ENCODE measurements at regions of chr17 and their contacts with region 1.

Region 1: GRCh38 chr17:1055751-1056645 is 59.1 kb downstream of the TIMM22 start:
- DNase-seq: peak; percentile 47 to 74 (median 68)
- H3K4me3 ChIP-seq: no peak overlapping the region
- H3K27ac ChIP-seq: no peak overlapping the region
- H3K4me1 ChIP-seq: no peaks in the 10 kb centered on the region
- H3K27me3 ChIP-seq: no peaks in the 10 kb centered on the region

Region 2: DNA sequence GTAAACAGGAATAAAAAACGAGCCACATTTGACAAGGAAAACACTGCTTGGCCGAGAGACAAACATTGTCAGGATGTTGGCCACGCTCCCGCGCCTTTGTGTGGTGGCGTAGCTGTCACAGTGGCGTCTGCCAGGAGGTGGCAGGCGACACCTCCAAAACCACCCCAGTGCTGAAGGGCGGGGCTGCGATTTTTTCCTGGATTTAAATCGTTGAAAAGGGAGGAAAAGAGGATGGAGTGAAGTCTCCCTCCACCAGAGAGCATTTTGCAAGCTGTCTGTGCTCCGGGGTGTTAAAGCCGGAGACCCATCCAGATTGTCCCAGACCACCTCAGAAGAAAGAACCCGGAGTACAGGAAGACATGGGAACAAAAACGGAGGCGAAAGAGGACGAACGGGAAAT is 261.1 kb before region 1 on chr17:
- CTCF ChIA-PET with region 1: interaction called, 20 read pairs
- POLR2A ChIA-PET with region 1: no interaction called
- DNase-seq: peak; percentile 54 to 65 (median 60)
- H3K4me3 ChIP-seq: peak overlapping the region in 1 of 7 experiments; percentile 31
- H3K27ac ChIP-seq: no peak overlapping the region
- H3K4me1 ChIP-seq: peaks cover 0 to 7% (median 0%) of the 10 kb centered on the region in 4 experiments
- H3K27me3 ChIP-seq: peaks cover 0 to 2% (median 0%) of the 10 kb centered on the region in 5 experiments

Region 3: DNA sequence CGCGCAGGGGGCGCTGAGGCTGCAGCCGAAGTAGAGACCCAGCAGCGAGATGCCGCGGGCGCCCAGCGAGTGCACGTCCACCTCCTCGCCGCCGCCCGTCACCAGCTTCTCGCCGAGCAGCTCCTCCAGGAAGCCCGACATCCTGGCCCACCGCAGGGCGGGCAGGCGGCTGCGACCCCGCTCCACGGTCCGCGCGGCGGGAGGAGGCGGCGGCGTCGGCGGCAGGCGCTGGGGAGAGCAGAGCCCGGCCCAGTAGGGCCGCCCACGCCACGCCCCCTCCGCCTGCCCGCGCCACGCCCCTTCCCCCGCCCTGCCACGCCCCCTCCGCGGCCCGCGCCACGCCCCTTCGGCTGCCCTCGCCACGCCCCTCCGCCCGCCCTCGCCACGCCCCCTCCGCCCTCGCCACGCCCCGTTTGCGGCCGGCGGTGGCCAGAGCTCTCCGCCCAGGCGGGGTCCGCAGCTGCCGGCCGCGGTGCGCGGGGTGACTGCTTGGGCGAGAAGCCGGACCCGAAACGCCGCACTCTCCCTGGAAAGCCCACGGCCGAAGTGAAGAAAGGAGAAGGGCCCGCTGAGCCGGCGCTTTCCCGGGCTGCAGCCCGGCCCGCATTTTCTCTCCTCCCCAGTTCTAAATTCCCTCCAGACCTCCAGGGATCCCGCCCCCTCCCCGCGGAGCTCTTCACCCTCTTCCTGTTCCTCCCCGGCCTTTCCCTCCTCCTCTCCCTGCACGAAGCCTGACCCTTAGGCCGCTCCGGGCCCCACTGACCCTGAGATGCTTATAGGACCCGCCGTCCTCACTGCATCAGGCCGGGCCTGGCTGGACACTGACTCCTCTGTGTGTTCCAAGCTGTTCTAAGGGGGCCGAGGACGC is 76.2 kb before region 1 on chr17 and contains the start of gene NXN:
- CTCF ChIA-PET with region 1: interaction called, 17 read pairs
- POLR2A ChIA-PET with region 1: no interaction called
- DNase-seq: peak; percentile 55 to 74 (median 73)
- H3K4me3 ChIP-seq: peak within 1 kb of the TSS; percentile 27 to 80 (median 63)
- H3K27ac ChIP-seq: no peak within 1 kb of the TSS
- H3K4me1 ChIP-seq: peaks cover 0 to 19% (median 13%) of the 10 kb centered on the region in 4 experiments
- H3K27me3 ChIP-seq: peaks cover 17 to 39% (median 20%) of the 10 kb centered on the region in 5 experiments

Region 4: GRCh38 chr17:996554-997344 is 59.2 kb before region 1 on chr17 and contains the start of gene TIMM22:
- CTCF ChIA-PET with region 1: interaction called, 15 read pairs
- POLR2A ChIA-PET with region 1: no interaction called
- DNase-seq: peak; percentile 98 to 99 (median 99)
- H3K4me3 ChIP-seq: peak within 1 kb of the TSS; percentile 85 to 100 (median 97)
- H3K27ac ChIP-seq: peak within 1 kb of the TSS; percentile 80 to 92
- H3K4me1 ChIP-seq: peaks cover 8 to 17% (median 12%) of the 10 kb centered on the region in 4 experiments
- H3K27me3 ChIP-seq: no peaks in the 10 kb centered on the region

Region 5: GRCh38 chr17:1005361-1005946 is 50.5 kb before region 1 on chr17:
- CTCF ChIA-PET with region 1: interaction called, 18 read pairs
- POLR2A ChIA-PET with region 1: no interaction called
- DNase-seq: peak; percentile 33 to 70 (median 67)
- H3K4me3 ChIP-seq: peak overlapping the region in 2 of 7 experiments; percentile 22 to 34
- H3K27ac ChIP-seq: peak overlapping the region in 1 of 2 experiments; percentile 21
- H3K4me1 ChIP-seq: peaks cover 0 to 27% (median 11%) of the 10 kb centered on the region in 4 experiments
- H3K27me3 ChIP-seq: no peaks in the 10 kb centered on the region

Region 6: DNA sequence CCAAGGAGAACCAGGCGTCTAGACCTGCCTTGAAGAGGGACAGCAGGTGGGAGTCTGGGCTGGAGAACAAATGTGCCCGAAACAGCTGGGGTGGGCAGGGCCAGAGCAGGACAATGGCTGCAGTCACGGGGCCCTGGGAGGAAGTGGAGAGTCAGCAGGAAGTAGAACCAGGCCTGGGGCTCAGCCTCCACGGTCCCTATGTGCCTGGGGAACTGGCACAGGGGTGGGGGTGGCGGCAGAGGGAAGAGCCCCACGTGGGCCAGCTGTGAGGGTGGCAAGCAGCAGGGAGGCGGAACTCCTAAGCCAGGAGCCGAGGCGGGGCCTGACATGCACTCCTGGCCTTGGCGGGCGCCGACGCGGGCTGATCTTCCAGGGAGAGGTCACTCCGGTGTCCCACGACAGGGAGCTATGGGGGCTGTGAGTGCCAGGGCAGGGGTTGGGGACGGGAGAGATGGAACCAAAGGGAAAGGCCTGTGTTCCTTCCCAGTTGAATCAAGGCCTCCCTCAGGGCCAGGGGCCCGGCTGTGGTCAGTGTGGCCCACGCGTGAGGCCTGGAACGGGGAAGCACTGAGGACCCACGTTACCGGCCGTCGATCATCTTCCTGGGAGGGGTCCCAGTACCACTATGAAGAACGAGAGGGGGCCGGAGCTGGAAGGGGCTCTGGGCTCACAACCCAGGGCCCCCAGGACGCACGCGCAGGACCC is 16.3 kb before region 1 on chr17:
- CTCF ChIA-PET with region 1: interaction called, 22 read pairs
- POLR2A ChIA-PET with region 1: interaction called, 3 read pairs
- DNase-seq: peak; percentile 44 to 80 (median 73)
- H3K4me3 ChIP-seq: peak overlapping the region in 3 of 7 experiments; percentile 26 to 48 (median 44)
- H3K27ac ChIP-seq: peak overlapping the region in 1 of 2 experiments; percentile 34
- H3K4me1 ChIP-seq: peaks cover 0 to 39% (median 33%) of the 10 kb centered on the region in 4 experiments
- H3K27me3 ChIP-seq: no peaks in the 10 kb centered on the region

Region 7: DNA sequence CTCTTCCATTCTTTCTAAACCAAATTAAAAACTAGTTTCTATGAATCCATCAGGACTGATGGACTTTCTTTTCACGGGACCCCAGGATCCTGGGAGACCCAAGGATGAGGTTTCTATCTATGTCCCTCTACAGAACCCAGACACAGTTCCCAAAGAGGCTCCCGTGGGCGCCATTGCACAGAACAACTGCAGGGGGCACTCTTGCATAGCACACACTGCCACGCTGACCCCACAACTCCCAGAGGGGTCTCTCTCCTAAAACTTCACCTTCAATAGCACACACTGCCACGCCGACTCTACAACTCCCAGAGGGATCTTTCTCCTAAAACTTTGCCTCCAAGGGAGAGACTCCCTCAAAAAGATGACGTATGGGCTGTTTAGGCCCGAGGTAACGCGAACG is 114.7 kb after region 1 on chr17:
- CTCF ChIA-PET with region 1: no interaction called
- POLR2A ChIA-PET with region 1: no interaction called
- DNase-seq: no peak
- H3K4me3 ChIP-seq: no peak overlapping the region
- H3K27ac ChIP-seq: no peak overlapping the region
- H3K4me1 ChIP-seq: peaks cover 0 to 15% (median 3%) of the 10 kb centered on the region in 4 experiments
- H3K27me3 ChIP-seq: no peaks in the 10 kb centered on the region

Measured in common myeloid progenitor, CD34-positive (primary cell).